CD8-positive, alpha-beta T cell (primary cell): ENCODE measurements at regions of chr2 and their contacts with region 1.

Region 1: DNA sequence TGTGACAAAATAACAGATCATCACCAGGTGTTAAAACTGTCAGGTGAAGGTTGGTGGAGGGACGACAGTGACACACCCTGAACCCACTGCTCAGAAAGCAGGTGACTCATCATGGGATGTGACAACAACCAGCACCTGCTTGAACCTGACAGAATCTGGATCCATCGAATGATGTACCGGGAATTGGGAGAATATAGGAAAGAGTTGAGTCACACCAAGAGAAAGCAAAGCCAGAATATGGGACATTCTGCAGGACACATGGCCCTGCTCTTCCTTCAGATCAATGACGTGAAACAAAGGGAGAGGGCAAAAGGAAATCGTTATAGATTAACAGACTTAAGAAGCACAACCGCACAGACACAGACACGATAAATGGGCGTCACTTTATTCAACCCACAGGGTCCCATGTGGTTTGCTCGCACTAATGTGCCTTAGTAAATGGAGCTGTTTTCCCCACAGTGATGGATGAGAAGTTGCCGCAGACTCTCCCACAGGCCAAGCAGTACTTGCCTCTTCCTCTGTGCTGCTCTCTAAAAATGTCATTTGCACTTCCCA is 100.1 kb downstream of the CRACDL start:
- DNase-seq: peak in 8 of 9 experiments; percentile 34 to 90 (median 67)
- ATAC-seq: peak; percentile 82
- H3K4me3 ChIP-seq: no peak overlapping the region
- H3K4me3 Mint-ChIP-seq: peak overlapping the region; percentile 55
- H3K27ac ChIP-seq: peak overlapping the region; percentile 25 to 61
- H3K27ac Mint-ChIP-seq: peak overlapping the region; percentile 93
- H3K4me1 ChIP-seq: peaks cover 26% of the 10 kb centered on the region
- H3K4me1 Mint-ChIP-seq: peaks cover 42% of the 10 kb centered on the region
- H3K27me3 ChIP-seq: no peaks in the 10 kb centered on the region
- H3K27me3 Mint-ChIP-seq: no peaks in the 10 kb centered on the region
- CTCF ChIP-seq: no peak

Region 2: DNA sequence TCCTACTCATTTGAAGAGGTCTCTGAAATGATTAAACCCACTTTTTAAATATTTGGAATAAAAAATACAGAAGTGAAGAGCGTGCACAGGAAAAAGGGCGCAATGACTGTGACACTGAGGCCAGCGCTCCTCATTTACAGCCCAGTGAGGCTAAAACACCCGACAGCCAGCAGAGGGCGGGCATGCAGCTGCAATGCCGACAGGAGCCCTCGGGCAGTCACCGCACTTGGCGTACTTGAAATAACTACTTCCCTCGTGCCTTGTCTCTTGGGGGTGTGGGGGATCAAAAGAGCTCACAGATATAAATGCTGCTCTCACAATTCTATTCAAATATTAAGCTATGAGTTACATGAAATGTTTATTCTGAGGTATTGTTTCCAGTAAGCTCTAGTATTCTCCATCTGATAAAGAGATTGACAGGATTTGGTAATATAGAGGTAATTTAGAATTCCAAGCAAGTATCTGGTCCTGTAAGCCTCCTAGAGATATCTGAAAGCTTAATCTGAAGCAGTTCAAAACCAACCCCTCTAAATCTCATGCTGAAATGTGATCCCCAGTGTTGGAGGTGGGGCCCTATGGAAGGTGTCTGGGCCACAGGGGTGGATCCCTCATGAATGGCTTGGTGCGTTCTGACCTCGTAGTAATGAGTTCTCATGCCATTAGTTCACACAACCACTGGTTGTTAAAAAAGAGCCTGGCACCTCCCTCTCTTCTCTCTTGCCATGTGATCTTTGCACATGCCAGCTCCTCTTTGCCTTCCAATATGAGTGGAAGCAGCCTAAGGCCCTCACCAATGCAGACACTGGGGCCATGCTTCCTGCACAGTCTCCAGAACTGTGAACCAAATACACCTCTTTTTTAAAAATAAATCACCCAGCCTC is 1028.9 kb before region 1 on chr2:
- CTCF ChIA-PET with region 1: no interaction called
- POLR2A ChIA-PET with region 1: no interaction called
- intact Hi-C with region 1: loop called (anchors 1 to 5 kb)
- DNase-seq: peak; percentile 56 to 84 (median 77)
- ATAC-seq: peak; percentile 95
- H3K4me3 ChIP-seq: no peak overlapping the region
- H3K4me3 Mint-ChIP-seq: no peak overlapping the region
- H3K27ac ChIP-seq: no peak overlapping the region
- H3K27ac Mint-ChIP-seq: no peak overlapping the region
- H3K4me1 ChIP-seq: no peaks in the 10 kb centered on the region
- H3K4me1 Mint-ChIP-seq: no peaks in the 10 kb centered on the region
- H3K27me3 ChIP-seq: no peaks in the 10 kb centered on the region
- H3K27me3 Mint-ChIP-seq: no peaks in the 10 kb centered on the region
- CTCF ChIP-seq: peak; percentile 95

Region 3: DNA sequence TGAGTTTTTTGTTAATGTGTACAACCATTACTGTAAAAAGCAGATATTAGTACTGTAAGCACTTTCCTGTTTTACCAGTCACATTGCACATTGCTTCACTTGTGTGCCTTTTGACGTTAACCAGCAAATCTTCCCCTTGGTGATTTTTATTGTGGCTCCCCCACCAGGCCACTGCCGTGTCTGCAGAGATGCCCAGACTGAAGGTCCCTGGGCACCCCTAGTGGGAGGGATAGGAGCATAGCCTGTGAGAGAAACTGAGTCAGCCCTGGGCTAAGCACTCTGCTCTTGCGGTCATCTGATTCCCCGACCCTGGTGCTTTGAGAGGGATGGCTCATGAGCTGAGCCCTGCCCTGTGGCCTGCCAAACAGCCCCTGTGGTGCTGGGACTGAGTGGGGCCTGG is 317.8 kb before region 1 on chr2:
- CTCF ChIA-PET with region 1: no interaction called
- POLR2A ChIA-PET with region 1: no interaction called
- intact Hi-C with region 1: loop called in 1 of 2 experiments (anchors 5 kb)
- DNase-seq: peak; percentile 20 to 80 (median 64)
- ATAC-seq: peak; percentile 76
- H3K4me3 ChIP-seq: no peak overlapping the region
- H3K4me3 Mint-ChIP-seq: no peak overlapping the region
- H3K27ac ChIP-seq: no peak overlapping the region
- H3K27ac Mint-ChIP-seq: peak overlapping the region; percentile 65
- H3K4me1 ChIP-seq: peaks cover 40% of the 10 kb centered on the region
- H3K4me1 Mint-ChIP-seq: peaks cover 55% of the 10 kb centered on the region
- H3K27me3 ChIP-seq: no peaks in the 10 kb centered on the region
- H3K27me3 Mint-ChIP-seq: no peaks in the 10 kb centered on the region
- CTCF ChIP-seq: peak; percentile 81

Region 4: DNA sequence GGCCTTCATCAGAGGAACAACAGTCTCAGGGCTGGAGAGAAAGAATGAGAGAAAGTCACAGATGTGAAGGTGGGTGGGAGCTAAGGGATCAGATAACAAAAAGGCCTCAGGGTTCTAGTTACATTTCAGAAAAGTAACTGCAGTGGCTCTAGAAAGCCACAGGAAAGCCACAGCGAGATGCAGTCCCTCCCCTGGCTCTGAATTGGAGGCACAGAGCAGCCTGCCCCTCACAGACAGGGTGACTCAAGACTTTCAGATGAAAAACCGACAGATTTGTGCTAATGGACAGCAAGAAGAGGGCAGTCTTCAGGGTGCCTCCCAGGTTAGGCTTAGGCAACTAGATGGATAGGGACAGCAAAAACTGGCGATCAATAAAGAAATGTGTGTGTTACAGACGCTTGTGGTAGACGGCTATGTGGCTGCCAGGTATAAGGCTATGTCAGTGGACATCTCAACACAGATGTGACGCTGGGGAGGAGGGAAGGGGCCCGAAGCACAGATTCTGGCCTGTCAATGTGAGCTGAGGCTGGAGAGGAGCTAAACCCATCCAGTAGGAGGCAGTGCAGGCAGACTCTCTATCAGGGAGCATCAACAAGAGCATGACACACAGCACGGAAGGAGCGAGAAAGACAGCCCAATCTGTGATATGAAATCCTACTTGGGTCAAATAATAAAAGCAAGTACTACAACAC is 201.4 kb before region 1 on chr2:
- CTCF ChIA-PET with region 1: interaction called, 3 read pairs
- POLR2A ChIA-PET with region 1: interaction called, 3 read pairs
- intact Hi-C with region 1: loop called in 1 of 2 experiments (anchors 1 kb)
- DNase-seq: peak in 6 of 9 experiments; percentile 26 to 84 (median 64)
- ATAC-seq: peak; percentile 52
- H3K4me3 ChIP-seq: no peak overlapping the region
- H3K4me3 Mint-ChIP-seq: peak overlapping the region; percentile 63
- H3K27ac ChIP-seq: peak overlapping the region; percentile 12 to 87
- H3K27ac Mint-ChIP-seq: peak overlapping the region; percentile 96
- H3K4me1 ChIP-seq: peaks cover 49% of the 10 kb centered on the region
- H3K4me1 Mint-ChIP-seq: peaks cover 48% of the 10 kb centered on the region
- H3K27me3 ChIP-seq: no peaks in the 10 kb centered on the region
- H3K27me3 Mint-ChIP-seq: no peaks in the 10 kb centered on the region
- CTCF ChIP-seq: peak; percentile 54

Region 5: DNA sequence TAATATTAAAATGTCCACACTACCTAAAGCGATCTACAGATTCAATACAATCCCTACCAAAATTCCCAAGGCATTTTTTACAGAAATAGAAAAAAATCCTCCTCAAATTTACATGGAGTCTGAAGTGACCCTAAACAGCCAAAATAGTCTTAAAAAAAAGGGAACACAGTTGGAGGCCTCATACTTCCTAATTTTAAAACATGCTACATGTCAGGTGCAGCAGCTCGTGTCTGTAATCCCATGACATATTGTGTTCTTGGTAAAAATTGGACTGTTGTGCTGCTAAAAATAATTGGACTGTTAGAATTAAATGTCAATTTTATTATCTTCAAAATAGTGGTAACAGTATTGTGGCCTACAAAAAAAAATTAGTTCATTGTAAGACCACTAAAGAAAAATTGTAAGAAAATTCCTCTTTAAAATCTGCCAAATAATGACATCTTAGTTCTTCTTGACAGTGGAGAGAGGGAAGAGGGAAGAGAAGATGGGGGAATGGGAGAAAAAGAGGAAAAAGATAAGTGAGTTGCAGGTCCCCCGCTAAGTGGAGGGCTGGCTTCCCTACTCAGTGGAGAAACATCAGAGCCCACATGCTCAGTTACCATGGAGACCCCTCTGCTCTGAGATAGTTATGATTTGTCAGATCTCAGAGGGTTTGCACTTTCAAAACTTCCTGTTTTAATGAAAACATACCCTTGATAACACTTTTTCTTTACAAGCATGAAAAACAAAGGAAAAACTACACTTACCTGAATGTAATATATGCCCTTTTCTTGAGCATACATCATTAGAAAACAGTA is 181.0 kb before region 1 on chr2:
- CTCF ChIA-PET with region 1: interaction called, 46 read pairs
- POLR2A ChIA-PET with region 1: interaction called, 8 read pairs
- intact Hi-C with region 1: no loop called
- DNase-seq: peak in 5 of 9 experiments; percentile 43 to 90 (median 75)
- ATAC-seq: peak; percentile 51
- H3K4me3 ChIP-seq: no peak overlapping the region
- H3K4me3 Mint-ChIP-seq: peak overlapping the region; percentile 69
- H3K27ac ChIP-seq: peak overlapping the region; percentile 77 to 80
- H3K27ac Mint-ChIP-seq: peak overlapping the region; percentile 99
- H3K4me1 ChIP-seq: peaks cover 92% of the 10 kb centered on the region
- H3K4me1 Mint-ChIP-seq: peaks cover 84% of the 10 kb centered on the region
- H3K27me3 ChIP-seq: no peaks in the 10 kb centered on the region
- H3K27me3 Mint-ChIP-seq: no peaks in the 10 kb centered on the region
- CTCF ChIP-seq: no peak

Region 6: DNA sequence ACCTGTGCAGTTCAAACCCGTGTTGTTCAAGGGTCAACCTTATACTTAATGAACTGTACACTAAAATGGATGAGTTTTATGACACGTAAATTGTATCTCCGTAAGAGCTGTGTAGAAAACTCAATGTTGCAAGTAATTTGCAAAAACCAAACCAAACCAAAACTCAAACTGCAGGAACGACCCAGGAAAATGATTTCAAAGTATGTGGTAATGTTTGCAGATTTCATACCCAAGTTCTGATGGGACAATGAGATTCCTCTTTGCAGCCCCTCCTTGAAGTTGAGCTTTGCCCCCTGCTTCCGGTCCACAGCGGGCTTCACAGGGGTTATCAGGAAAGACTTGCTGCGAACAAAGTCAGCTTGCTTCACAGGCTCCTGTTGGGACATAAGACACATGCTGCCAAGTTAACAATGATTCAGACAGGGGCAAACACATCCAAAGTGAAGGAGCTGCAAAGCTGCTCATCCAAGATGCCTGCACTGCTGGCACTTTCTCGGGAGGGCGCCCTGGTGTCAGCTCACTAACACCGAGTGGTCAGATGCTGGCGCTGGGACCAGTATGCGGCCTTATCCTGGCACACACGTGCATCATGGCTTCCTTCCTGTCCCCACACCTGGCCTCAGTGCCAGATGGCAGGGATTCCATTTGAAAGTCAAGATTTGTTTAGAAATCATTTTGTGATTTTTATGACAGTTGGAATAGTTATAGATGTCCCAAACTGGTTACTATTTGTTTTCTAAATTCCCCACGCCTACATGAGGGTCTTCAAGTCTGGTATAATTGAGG is 39.8 kb before region 1 on chr2:
- CTCF ChIA-PET with region 1: no interaction called
- POLR2A ChIA-PET with region 1: no interaction called
- intact Hi-C with region 1: no loop called
- DNase-seq: no peak
- ATAC-seq: no peak
- H3K4me3 ChIP-seq: no peak overlapping the region
- H3K4me3 Mint-ChIP-seq: no peak overlapping the region
- H3K27ac ChIP-seq: no peak overlapping the region
- H3K27ac Mint-ChIP-seq: no peak overlapping the region
- H3K4me1 ChIP-seq: no peaks in the 10 kb centered on the region
- H3K4me1 Mint-ChIP-seq: no peaks in the 10 kb centered on the region
- H3K27me3 ChIP-seq: no peaks in the 10 kb centered on the region
- H3K27me3 Mint-ChIP-seq: no peaks in the 10 kb centered on the region
- CTCF ChIP-seq: no peak

Region 7: GRCh38 chr2:98822301-98823164 is 13.4 kb before region 1 on chr2:
- CTCF ChIA-PET with region 1: interaction called, 3 read pairs
- POLR2A ChIA-PET with region 1: interaction called, 3 read pairs
- intact Hi-C with region 1: loop called in 1 of 2 experiments (anchors 1 kb)
- DNase-seq: peak; percentile 37 to 83 (median 58)
- ATAC-seq: peak; percentile 91
- H3K4me3 ChIP-seq: peak overlapping the region; percentile 50 to 53
- H3K4me3 Mint-ChIP-seq: peak overlapping the region; percentile 58
- H3K27ac ChIP-seq: peak overlapping the region in 1 of 2 experiments; percentile 24
- H3K27ac Mint-ChIP-seq: no peak overlapping the region
- H3K4me1 ChIP-seq: peaks cover under 1% of the 10 kb centered on the region
- H3K4me1 Mint-ChIP-seq: peaks cover 22% of the 10 kb centered on the region
- H3K27me3 ChIP-seq: no peaks in the 10 kb centered on the region
- H3K27me3 Mint-ChIP-seq: no peaks in the 10 kb centered on the region
- CTCF ChIP-seq: peak; percentile 19

Region 8: DNA sequence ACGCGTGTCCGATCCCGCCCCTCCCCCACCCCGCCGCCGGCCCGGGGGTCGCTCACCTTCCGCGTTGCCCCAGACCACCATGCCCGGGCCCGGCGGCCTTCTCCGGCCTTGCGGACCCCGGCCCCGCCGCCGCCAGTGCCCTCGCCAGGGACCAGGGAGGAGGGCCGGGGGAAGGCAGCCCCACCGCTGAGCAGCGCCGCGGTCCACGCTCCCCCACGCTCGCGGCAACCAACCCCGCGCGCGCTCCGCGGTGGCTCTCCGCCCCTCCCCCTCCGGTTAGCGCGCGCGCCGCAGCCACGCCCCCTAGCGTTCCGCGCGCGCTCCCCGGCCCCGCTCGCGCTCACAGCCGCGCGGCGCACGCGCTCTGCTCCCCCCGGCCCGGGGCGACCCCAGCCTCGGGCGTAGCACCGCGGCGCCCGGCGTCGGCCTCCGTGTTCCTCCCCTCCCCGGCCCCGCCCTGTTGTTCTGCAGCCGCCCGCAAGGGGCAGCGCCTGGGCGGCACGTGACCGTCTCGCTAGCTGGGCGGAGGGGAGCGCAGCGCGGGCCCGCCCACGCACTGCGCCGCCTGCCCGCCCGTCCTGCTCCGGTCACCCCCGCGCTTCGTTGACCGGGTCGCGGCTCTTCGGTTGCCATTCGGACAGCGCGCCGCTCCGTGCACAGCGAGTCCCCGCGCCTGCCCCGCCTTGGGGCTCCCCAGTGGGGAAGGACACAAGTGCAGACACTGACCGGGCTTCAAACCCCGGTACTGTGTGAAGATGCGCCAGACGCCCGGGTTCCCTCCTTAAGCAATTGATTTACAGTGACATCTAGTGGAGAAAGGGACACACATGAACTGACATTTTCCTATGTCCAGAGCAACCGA is 654.1 kb after region 1 on chr2 and contains the start of gene REV1:
- CTCF ChIA-PET with region 1: no interaction called
- POLR2A ChIA-PET with region 1: no interaction called
- intact Hi-C with region 1: loop called in 1 of 2 experiments (anchors 5 kb)
- DNase-seq: peak; percentile 85 to 97 (median 94)
- ATAC-seq: peak; percentile 88
- H3K4me3 ChIP-seq: peak within 1 kb of the TSS; percentile 87 to 89
- H3K4me3 Mint-ChIP-seq: peak within 1 kb of the TSS; percentile 97
- H3K27ac ChIP-seq: peak within 1 kb of the TSS; percentile 76 to 86
- H3K27ac Mint-ChIP-seq: peak within 1 kb of the TSS; percentile 98
- H3K4me1 ChIP-seq: peaks cover 24% of the 10 kb centered on the region
- H3K4me1 Mint-ChIP-seq: peaks cover 43% of the 10 kb centered on the region
- H3K27me3 ChIP-seq: no peaks in the 10 kb centered on the region
- H3K27me3 Mint-ChIP-seq: no peaks in the 10 kb centered on the region
- CTCF ChIP-seq: peak; percentile 78
- total RNA-seq, gene REV1: 39.3 to 42.3 TPM

Region 9: DNA sequence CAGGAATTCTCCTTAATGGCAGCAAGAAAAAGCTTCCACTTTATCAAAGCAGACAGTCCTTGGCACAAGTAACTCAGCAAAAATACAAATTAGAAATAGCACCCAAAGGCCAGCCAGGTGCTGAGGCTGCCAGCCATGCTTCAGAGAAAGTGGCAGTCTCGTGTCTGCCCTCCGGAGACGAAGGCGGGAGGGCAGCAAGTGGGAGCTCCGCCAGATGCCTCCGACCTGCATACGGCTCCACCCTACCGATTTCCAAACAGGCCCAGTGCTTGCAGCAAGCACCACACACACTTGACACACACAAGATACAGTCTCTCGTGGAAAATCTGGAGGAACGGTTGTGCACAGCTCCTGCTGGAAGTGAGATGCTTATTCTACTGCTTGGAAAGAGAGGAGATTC is 788.8 kb after region 1 on chr2:
- CTCF ChIA-PET with region 1: no interaction called
- POLR2A ChIA-PET with region 1: no interaction called
- intact Hi-C with region 1: no loop called
- DNase-seq: no peak
- ATAC-seq: no peak
- H3K4me3 ChIP-seq: no peak overlapping the region
- H3K4me3 Mint-ChIP-seq: no peak overlapping the region
- H3K27ac ChIP-seq: no peak overlapping the region
- H3K27ac Mint-ChIP-seq: no peak overlapping the region
- H3K4me1 ChIP-seq: no peaks in the 10 kb centered on the region
- H3K4me1 Mint-ChIP-seq: no peaks in the 10 kb centered on the region
- H3K27me3 ChIP-seq: no peaks in the 10 kb centered on the region
- H3K27me3 Mint-ChIP-seq: no peaks in the 10 kb centered on the region
- CTCF ChIP-seq: no peak